ENCODE measurements at regions of chr1 and their contacts with region 1.

Region 1: GRCh38 chr1:112619520-112620376 is at the start of gene CAPZA1:
- DNase-seq: peak; percentile 82 to 94 (median 90)
- ATAC-seq: peak; percentile 73 to 77
- H3K4me3 Mint-ChIP-seq: peak within 1 kb of the TSS; percentile 92 to 100 (median 98)
- H3K27ac Mint-ChIP-seq: peak within 1 kb of the TSS; percentile 98 to 100 (median 100)
- H3K4me1 Mint-ChIP-seq: peaks cover 19 to 52% (median 50%) of the 10 kb centered on the region in 4 donors
- H3K27me3 Mint-ChIP-seq: no peaks in the 10 kb centered on the region
- polyA plus RNA-seq, gene CAPZA1: 100 to 169 (median 116) TPM

Region 2: GRCh38 chr1:112674439-112674985 is 54.8 kb after region 1 on chr1 and contains the start of gene MOV10:
- POLR2A ChIA-PET with region 1: interaction called, 61 read pairs
- DNase-seq: peak; percentile 37 to 75 (median 56)
- ATAC-seq: peak; percentile 63 to 70
- H3K4me3 Mint-ChIP-seq: peak within 1 kb of the TSS; percentile 91 to 99 (median 96)
- H3K27ac Mint-ChIP-seq: peak within 1 kb of the TSS; percentile 91 to 97 (median 96)
- H3K4me1 Mint-ChIP-seq: peaks cover 43 to 61% (median 51%) of the 10 kb centered on the region in 4 donors
- H3K27me3 Mint-ChIP-seq: no peaks in the 10 kb centered on the region
- polyA plus RNA-seq, gene MOV10: 24.7 to 40.4 (median 29.5) TPM

Region 3: DNA sequence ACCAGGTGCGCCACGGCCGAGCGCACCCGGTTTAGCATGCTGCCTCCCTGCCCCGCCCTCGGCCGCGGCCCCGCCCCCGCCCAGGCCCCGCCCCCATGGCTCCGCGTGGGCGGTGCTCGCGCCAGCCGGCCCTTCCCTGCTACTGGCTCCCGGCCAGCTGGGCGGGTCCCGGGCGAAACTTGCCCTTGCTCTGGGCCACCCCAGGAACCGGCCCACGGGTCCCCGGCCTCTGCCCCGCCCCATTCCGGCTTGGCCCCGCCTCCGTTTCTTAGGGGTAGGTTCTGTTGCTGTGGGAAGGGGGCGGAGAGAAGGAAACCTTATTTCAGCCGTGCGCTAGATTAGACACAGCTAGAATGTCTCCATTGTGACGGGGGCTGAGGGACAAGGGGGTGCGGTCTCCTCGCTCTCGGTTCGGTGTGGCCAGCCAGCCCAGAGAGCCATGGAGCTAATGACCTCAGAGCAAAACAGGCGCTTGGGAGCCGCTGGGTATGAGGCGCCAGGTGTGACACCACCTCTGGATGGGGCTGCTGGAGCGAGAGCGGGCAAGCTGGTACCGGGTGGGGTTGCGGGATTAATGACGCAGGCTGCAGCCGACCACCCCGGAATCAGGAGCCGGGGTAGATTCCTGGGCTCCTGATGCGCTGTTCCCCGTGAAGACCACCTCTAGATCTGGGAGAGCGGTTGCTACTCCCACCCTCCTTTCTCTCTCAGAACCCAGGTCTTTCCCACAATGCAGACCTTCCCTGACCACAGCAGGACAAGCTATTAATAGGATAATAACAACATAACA is 95.7 kb after region 1 on chr1 and contains the start of gene PPM1J:
- POLR2A ChIA-PET with region 1: interaction called, 12 read pairs
- DNase-seq: peak; percentile 86 to 96 (median 91)
- ATAC-seq: peak; percentile 80 to 82
- H3K4me3 Mint-ChIP-seq: peak within 1 kb of the TSS; percentile 84 to 95 (median 92)
- H3K27ac Mint-ChIP-seq: peak within 1 kb of the TSS; percentile 23 to 94 (median 90)
- H3K4me1 Mint-ChIP-seq: peaks cover 14 to 29% (median 23%) of the 10 kb centered on the region in 4 donors
- H3K27me3 Mint-ChIP-seq: peaks cover 2 to 43% (median 13%) of the 10 kb centered on the region in 5 donors
- polyA plus RNA-seq, gene PPM1J: not detected

Measured in naive thymus-derived CD8-positive, alpha-beta T cell (primary cell).